A673 (cell line): ENCODE measurements at regions of chr2 and their contacts with region 1.

Region 1: GRCh38 chr2:182186132-182186735 is 200.6 kb downstream of the PPP1R1C start:
- DNase-seq: peak; percentile 80
- H3K4me3 ChIP-seq: no peak overlapping the region
- H3K27ac ChIP-seq: peak overlapping the region; percentile 40
- H3K4me1 ChIP-seq: peaks cover 23% of the 10 kb centered on the region
- H3K27me3 ChIP-seq: no peaks in the 10 kb centered on the region
- CTCF ChIP-seq: peak; percentile 84

Region 2: GRCh38 chr2:182110347-182110746 is 75.9 kb before region 1 on chr2:
- CTCF ChIA-PET with region 1: no interaction called
- POLR2A ChIA-PET with region 1: no interaction called
- intact Hi-C with region 1: no loop called
- DNase-seq: no peak
- H3K4me3 ChIP-seq: no peak overlapping the region
- H3K27ac ChIP-seq: no peak overlapping the region
- H3K4me1 ChIP-seq: no peaks in the 10 kb centered on the region
- H3K27me3 ChIP-seq: no peaks in the 10 kb centered on the region
- CTCF ChIP-seq: no peak

Region 3: GRCh38 chr2:182302174-182302573 is 115.9 kb after region 1 on chr2:
- CTCF ChIA-PET with region 1: no interaction called
- POLR2A ChIA-PET with region 1: no interaction called
- intact Hi-C with region 1: loop called (anchors 5 kb)
- DNase-seq: peak; percentile 46
- H3K4me3 ChIP-seq: no peak overlapping the region
- H3K27ac ChIP-seq: no peak overlapping the region
- H3K4me1 ChIP-seq: no peaks in the 10 kb centered on the region
- H3K27me3 ChIP-seq: no peaks in the 10 kb centered on the region
- CTCF ChIP-seq: no peak

Region 4: GRCh38 chr2:182359990-182360662 is 173.9 kb after region 1 on chr2:
- CTCF ChIA-PET with region 1: no interaction called
- POLR2A ChIA-PET with region 1: no interaction called
- intact Hi-C with region 1: loop called (anchors 10 kb)
- DNase-seq: peak; percentile 87
- H3K4me3 ChIP-seq: no peak overlapping the region
- H3K27ac ChIP-seq: peak overlapping the region; percentile 52
- H3K4me1 ChIP-seq: peaks cover 34% of the 10 kb centered on the region
- H3K27me3 ChIP-seq: no peaks in the 10 kb centered on the region
- CTCF ChIP-seq: no peak

Region 5: GRCh38 chr2:182372661-182373060 is 186.4 kb after region 1 on chr2:
- CTCF ChIA-PET with region 1: no interaction called
- POLR2A ChIA-PET with region 1: no interaction called
- intact Hi-C with region 1: loop called (anchors 10 kb)
- DNase-seq: peak; percentile 68
- H3K4me3 ChIP-seq: no peak overlapping the region
- H3K27ac ChIP-seq: no peak overlapping the region
- H3K4me1 ChIP-seq: peaks cover 9% of the 10 kb centered on the region
- H3K27me3 ChIP-seq: no peaks in the 10 kb centered on the region
- CTCF ChIP-seq: no peak

Region 6: DNA sequence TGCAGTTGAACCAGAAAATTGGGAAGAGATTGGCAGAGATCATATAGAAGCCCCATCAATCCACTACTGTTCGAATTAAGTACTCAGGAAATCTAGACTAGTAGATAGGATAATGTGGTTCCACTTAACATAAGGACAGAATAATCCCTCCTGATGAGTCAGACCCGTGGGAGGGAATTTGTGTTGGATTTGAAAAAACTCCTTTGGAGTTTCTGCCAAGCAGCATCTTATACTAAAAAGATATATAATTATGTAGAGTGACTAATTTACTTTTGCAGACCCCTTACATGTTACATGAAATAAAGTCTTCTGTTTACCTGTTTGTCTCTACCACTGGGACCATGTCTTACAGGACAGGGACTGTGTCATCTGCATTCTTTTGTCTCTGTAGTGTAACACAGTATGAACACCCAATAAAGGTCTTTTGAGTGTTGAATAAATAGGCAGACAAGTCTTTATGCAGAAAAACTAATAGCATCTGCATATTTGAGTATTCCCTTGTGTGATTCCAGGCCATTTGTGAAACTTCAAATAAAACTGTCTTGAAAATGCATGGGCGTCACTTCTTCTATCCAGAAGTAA is 407.3 kb after region 1 on chr2:
- CTCF ChIA-PET with region 1: no interaction called
- POLR2A ChIA-PET with region 1: no interaction called
- intact Hi-C with region 1: loop called (anchors 5 kb)
- DNase-seq: peak; percentile 96
- H3K4me3 ChIP-seq: no peak overlapping the region
- H3K27ac ChIP-seq: no peak overlapping the region
- H3K4me1 ChIP-seq: peaks cover 49% of the 10 kb centered on the region
- H3K27me3 ChIP-seq: no peaks in the 10 kb centered on the region
- CTCF ChIP-seq: no peak

Region 7: DNA sequence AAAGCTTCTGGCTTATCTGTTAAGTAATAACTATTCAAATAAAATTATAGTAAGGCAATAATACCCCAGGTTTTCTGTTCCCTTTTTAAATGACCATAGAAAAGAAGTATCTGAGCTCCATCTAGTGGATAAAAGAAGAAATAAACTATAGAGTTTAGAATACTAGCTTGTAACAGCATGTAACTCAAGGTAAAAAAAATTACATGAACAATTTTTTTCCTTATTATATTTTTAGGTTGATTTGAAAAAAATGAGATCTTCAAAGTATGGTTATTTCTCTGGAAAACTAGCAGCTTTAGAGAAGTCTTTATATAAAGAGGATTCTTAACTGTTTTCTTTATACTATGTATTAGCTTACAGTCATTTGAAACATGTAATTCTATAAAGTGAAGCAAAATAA is 793.9 kb after region 1 on chr2:
- CTCF ChIA-PET with region 1: no interaction called
- POLR2A ChIA-PET with region 1: no interaction called
- intact Hi-C with region 1: loop called (anchors 5 kb)
- DNase-seq: peak; percentile 81
- H3K4me3 ChIP-seq: no peak overlapping the region
- H3K27ac ChIP-seq: no peak overlapping the region
- H3K4me1 ChIP-seq: peaks cover 26% of the 10 kb centered on the region
- H3K27me3 ChIP-seq: no peaks in the 10 kb centered on the region
- CTCF ChIP-seq: peak; percentile 69